ENCODE measurements at regions of chr11 and their contacts with region 1.

Region 1: DNA sequence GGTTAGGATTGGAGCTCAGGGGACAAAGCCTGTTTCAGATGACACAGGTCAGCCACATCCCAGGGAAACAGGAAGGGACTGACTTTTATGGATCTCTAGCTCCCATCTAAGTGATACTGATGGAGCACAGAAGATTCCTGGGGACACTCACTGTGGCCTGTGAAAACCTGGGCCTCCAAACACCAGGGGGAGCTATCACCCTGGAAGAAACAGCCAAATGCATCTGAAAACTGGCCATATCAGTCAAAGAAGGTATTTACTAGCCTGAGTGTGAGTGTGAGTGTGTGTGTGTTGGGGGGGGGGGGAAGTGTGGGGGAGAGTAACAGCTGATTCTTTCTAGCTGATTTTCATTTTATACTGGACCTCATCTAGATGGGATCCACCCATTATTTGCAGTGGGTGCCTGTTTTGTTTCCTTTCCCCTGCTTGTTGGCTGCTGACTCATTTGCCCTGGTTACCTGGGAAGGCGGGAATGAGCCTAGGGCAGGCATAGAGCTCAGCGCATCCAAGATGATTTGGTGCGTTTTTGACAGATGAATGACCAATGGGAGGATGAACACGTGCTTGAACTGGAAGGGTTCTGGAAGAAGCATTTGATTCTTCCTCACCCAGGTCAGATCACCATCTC is 284.0 kb downstream of the KIRREL3 start:
- DNase-seq: no peak
- H3K4me3 ChIP-seq: no peak overlapping the region
- H3K27ac ChIP-seq: no peak overlapping the region
- H3K27me3 ChIP-seq: no peaks in the 10 kb centered on the region
- CTCF ChIP-seq: peak; percentile 70

Region 2: GRCh38 chr11:126186708-126187529 is 529.7 kb before region 1 on chr11:
- CTCF ChIA-PET with region 1: no interaction called
- POLR2A ChIA-PET with region 1: no interaction called
- DNase-seq: no peak
- H3K4me3 ChIP-seq: no peak overlapping the region
- H3K27ac ChIP-seq: no peak overlapping the region
- H3K27me3 ChIP-seq: no peaks in the 10 kb centered on the region
- CTCF ChIP-seq: peak; percentile 31

Region 3: GRCh38 chr11:126700773-126701519 is 15.6 kb before region 1 on chr11:
- CTCF ChIA-PET with region 1: interaction called, 23 read pairs
- POLR2A ChIA-PET with region 1: no interaction called
- DNase-seq: no peak
- H3K4me3 ChIP-seq: no peak overlapping the region
- H3K27ac ChIP-seq: no peak overlapping the region
- H3K27me3 ChIP-seq: no peaks in the 10 kb centered on the region
- CTCF ChIP-seq: no peak

Region 4: GRCh38 chr11:126732981-126733380 is 16.4 kb after region 1 on chr11:
- CTCF ChIA-PET with region 1: interaction called, 18 read pairs
- POLR2A ChIA-PET with region 1: no interaction called
- DNase-seq: no peak
- H3K4me3 ChIP-seq: no peak overlapping the region
- H3K27ac ChIP-seq: no peak overlapping the region
- H3K27me3 ChIP-seq: no peaks in the 10 kb centered on the region
- CTCF ChIP-seq: no peak

Region 5: GRCh38 chr11:126744699-126745098 is 28.1 kb after region 1 on chr11:
- CTCF ChIA-PET with region 1: interaction called, 10 read pairs
- POLR2A ChIA-PET with region 1: no interaction called
- DNase-seq: no peak
- H3K4me3 ChIP-seq: no peak overlapping the region
- H3K27ac ChIP-seq: no peak overlapping the region
- H3K27me3 ChIP-seq: no peaks in the 10 kb centered on the region
- CTCF ChIP-seq: no peak

Region 6: DNA sequence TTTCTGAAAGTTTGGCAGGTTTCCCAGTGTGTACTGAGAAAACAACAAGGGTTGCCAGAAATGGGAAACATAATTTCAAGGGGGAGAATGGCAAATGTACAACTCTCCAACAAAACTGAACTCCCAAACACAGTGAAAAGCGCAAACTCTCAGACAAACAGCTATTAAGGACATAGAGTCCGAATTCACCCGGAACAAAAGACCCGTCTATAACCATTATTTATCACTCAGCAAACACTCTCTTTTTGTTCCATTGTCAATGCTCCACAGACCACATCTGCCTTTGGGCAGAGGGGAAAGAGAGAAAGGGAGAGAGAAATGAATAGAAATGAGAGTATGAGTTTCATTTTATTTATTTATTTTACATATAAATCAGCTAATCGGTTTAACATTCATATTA is 262.3 kb after region 1 on chr11:
- CTCF ChIA-PET with region 1: interaction called, 19 read pairs
- POLR2A ChIA-PET with region 1: no interaction called
- DNase-seq: no peak
- H3K4me3 ChIP-seq: no peak overlapping the region
- H3K27ac ChIP-seq: no peak overlapping the region
- H3K27me3 ChIP-seq: no peaks in the 10 kb centered on the region
- CTCF ChIP-seq: no peak

Region 7: DNA sequence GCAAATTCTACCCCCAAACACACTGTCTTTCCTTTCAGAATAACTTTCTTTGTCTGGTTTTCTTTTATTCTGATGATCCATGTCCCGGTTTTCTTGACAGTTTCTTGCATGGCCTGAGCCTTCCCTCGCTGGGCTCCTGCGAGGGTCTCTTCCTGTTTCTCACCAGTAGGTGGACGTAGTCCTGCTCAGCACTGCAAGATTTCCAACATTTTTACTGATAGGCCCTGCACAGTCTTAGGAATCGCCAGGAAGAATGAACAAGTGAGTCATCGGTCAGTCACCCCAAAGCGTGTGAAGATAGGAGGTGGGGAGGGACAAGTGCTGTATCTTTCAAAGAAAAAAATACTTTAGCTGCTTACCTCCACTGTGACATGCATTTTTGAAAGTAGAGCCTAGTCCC is 300.9 kb after region 1 on chr11:
- CTCF ChIA-PET with region 1: interaction called, 13 read pairs
- POLR2A ChIA-PET with region 1: no interaction called
- DNase-seq: peak; percentile 60
- H3K4me3 ChIP-seq: no peak overlapping the region
- H3K27ac ChIP-seq: no peak overlapping the region
- H3K27me3 ChIP-seq: peaks cover 4% of the 10 kb centered on the region
- CTCF ChIP-seq: peak; percentile 74

Region 8: GRCh38 chr11:127345819-127346459 is 629.4 kb after region 1 on chr11:
- CTCF ChIA-PET with region 1: interaction called, 14 read pairs
- POLR2A ChIA-PET with region 1: no interaction called
- DNase-seq: no peak
- H3K4me3 ChIP-seq: no peak overlapping the region
- H3K27ac ChIP-seq: no peak overlapping the region
- H3K27me3 ChIP-seq: no peaks in the 10 kb centered on the region
- CTCF ChIP-seq: peak; percentile 89

Measured in AG04450 (cell line).